HEK293 (cell line): ENCODE measurements at regions of chr16 and their contacts with region 1.

Region 1: DNA sequence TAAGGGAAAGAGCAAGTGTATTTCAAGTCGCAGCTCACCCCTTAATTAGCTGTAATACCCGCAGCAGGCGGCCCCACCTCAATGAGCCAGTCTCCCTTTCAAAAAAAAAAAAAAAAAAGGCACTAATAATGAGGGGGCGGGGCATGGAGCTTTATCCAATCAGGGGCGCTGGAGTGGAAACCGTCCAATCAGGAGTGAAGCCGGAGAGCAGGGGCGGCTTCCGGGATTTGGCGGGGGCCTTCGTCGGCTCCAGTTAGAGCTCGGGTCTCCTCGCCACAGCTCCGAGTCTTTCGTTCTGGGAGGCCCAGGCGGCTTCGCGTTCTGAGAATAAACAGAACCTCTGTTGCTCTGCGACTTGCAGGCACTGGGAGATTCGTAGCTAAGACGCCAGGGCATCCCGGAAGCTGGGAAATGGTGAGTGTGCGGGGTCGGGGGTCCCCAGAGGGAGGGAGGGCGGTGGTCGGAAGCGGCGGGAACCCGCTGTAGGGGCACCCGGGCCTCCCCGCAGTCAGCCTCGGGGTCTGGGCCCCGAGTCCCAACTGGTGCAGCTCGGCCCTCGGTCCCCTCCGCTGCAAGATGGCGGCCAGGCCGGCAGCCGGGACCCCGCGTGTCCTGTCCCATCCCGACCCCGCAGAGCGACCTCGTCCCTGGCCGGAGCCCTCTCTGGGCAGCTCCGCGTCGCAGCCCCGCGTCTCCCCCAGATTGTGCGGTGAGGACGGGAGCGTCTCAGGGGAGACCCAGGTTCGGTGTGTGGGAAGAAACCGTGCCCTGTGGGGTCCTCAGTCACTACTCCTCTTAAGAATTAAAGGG is at the start of gene ZNF267:
- H3K4me3 ChIP-seq: peak within 1 kb of the TSS; percentile 84
- H3K27ac ChIP-seq: peak within 1 kb of the TSS; percentile 94
- H3K4me1 ChIP-seq: peaks cover 21% of the 10 kb centered on the region
- CTCF ChIP-seq: no peak; the same call in 1 of the 2 replicates

Region 2: GRCh38 chr16:31458844-31459721 is 414.7 kb before region 1 on chr16 and contains the start of gene ARMC5:
- CTCF ChIA-PET with region 1: interaction called, 6 read pairs
- POLR2A ChIA-PET with region 1: interaction called, 14 read pairs
- H3K4me3 ChIP-seq: peak within 1 kb of the TSS; percentile 85
- H3K27ac ChIP-seq: peak within 1 kb of the TSS; percentile 83
- H3K4me1 ChIP-seq: peaks cover 5% of the 10 kb centered on the region
- CTCF ChIP-seq: peak; percentile 89

Region 3: DNA sequence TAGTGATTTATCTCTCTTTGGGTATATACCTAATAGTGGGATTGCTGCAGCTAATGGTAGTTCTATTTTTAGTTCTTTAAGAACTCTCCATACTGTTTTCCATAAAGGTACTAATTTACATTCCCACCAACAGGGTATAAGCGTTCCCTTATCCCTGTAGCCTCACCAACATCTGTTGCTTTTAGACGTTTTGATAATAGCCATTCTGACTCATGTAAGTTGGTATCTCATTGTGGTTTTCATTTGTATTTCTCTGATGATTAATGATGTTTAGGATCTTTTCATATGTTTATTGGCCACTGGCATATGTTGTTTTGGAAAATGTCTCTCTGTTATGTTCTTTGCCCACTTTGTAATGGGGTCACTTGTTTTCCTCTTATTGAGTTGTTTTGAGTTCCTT is 88.6 kb before region 1 on chr16:
- CTCF ChIA-PET with region 1: no interaction called
- POLR2A ChIA-PET with region 1: no interaction called
- H3K4me3 ChIP-seq: no peak overlapping the region
- H3K27ac ChIP-seq: no peak overlapping the region
- H3K4me1 ChIP-seq: no peaks in the 10 kb centered on the region
- CTCF ChIP-seq: no peak

Region 4: DNA sequence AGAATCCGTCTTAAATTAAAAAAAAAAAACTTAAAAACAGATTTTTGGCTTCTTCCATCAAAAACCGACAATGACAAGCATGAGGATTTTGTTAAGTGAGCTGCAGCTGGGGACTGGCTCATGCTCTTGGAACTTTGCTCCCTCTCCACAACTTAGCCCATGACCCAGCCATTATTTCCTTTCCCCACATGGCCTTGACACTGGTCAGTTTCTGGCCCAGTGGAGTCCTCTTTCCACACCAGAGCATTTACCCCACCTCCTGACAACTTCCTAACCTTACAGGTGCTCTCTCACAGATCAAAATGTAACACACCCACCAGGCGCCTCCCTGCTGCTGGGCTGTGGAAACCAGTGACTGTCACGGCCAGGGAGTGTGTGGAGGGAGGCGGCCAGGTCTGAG is 62.9 kb before region 1 on chr16:
- CTCF ChIA-PET with region 1: no interaction called
- POLR2A ChIA-PET with region 1: no interaction called
- H3K4me3 ChIP-seq: no peak overlapping the region
- H3K27ac ChIP-seq: no peak overlapping the region
- H3K4me1 ChIP-seq: no peaks in the 10 kb centered on the region
- CTCF ChIP-seq: no peak